GM12878 (cell line): ENCODE measurements at regions of chr2 and their contacts with region 1.

Region 1: GRCh38 chr2:179264368-179265081 is at the start of gene SESTD1:
- DNase-seq: no peak
- ATAC-seq: peak; percentile 70
- H3K4me3 ChIP-seq: peak within 1 kb of the TSS; percentile 97
- H3K27ac ChIP-seq: peak within 1 kb of the TSS; percentile 52; the same call in 1 of the 2 replicates
- H3K4me1 ChIP-seq: peaks cover 5% of the 10 kb centered on the region
- H3K27me3 ChIP-seq: no peaks in the 10 kb centered on the region
- CTCF ChIP-seq: no peak
- EP300 ChIP-seq: no peak
- POLR2A ChIP-seq: peak; percentile 64
- RAD21 ChIP-seq: no peak
- polyA plus RNA-seq, gene SESTD1: 5.4 to 6.2 TPM

Region 2: DNA sequence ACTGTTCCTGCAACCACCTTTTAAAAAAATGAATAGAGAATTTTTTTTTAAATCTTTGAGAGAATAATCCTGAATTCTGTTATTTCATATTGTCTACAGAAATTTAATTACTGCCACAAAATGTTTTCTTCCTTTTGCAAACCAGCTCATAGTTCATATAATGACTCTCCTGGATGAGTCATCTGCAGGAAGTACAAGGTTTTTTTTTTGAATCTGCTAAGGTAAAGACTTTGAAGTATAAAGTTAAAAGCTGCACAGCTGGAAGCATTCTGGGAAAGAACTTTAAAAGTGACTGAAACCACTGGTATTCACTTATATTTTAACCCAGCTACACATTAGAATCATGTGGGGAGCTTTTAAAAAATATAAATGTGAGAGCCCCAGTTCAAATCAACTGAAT is 25.3 kb before region 1 on chr2:
- CTCF ChIA-PET with region 1: interaction called, 4 read pairs
- POLR2A ChIA-PET with region 1: interaction called, 10 read pairs
- RAD21 ChIA-PET with region 1: interaction called, 11 read pairs
- SMC1A ChIA-PET with region 1: interaction called, 13 read pairs
- in situ Hi-C with region 1: no loop called
- intact Hi-C with region 1: no loop called
- DNase-seq: no peak
- ATAC-seq: peak; percentile 83
- H3K4me3 ChIP-seq: no peak overlapping the region
- H3K27ac ChIP-seq: no peak overlapping the region
- H3K4me1 ChIP-seq: no peaks in the 10 kb centered on the region
- H3K27me3 ChIP-seq: no peaks in the 10 kb centered on the region
- CTCF ChIP-seq: no peak
- EP300 ChIP-seq: no peak
- POLR2A ChIP-seq: no peak
- RAD21 ChIP-seq: no peak

Region 3: GRCh38 chr2:179247318-179248023 is 17.1 kb before region 1 on chr2:
- CTCF ChIA-PET with region 1: interaction called, 16 read pairs
- POLR2A ChIA-PET with region 1: interaction called, 10 read pairs
- RAD21 ChIA-PET with region 1: interaction called, 18 read pairs
- SMC1A ChIA-PET with region 1: interaction called, 24 read pairs
- in situ Hi-C with region 1: no loop called
- intact Hi-C with region 1: no loop called
- DNase-seq: no peak
- ATAC-seq: peak; percentile 48
- H3K4me3 ChIP-seq: peak overlapping the region; percentile 30; the same call in 1 of the 2 replicates
- H3K27ac ChIP-seq: peak overlapping the region; percentile 79
- H3K4me1 ChIP-seq: peaks cover 19% of the 10 kb centered on the region
- H3K27me3 ChIP-seq: no peaks in the 10 kb centered on the region
- CTCF ChIP-seq: no peak
- EP300 ChIP-seq: no peak
- POLR2A ChIP-seq: no peak
- RAD21 ChIP-seq: no peak

Region 4: GRCh38 chr2:179253226-179253625 is 11.3 kb before region 1 on chr2:
- CTCF ChIA-PET with region 1: interaction called, 16 read pairs
- POLR2A ChIA-PET with region 1: interaction called, 10 read pairs
- RAD21 ChIA-PET with region 1: interaction called, 18 read pairs
- SMC1A ChIA-PET with region 1: interaction called, 24 read pairs
- in situ Hi-C with region 1: no loop called
- intact Hi-C with region 1: no loop called
- DNase-seq: no peak
- ATAC-seq: peak; percentile 75
- H3K4me3 ChIP-seq: no peak overlapping the region
- H3K27ac ChIP-seq: peak overlapping the region; percentile 63; the same call in 1 of the 2 replicates
- H3K4me1 ChIP-seq: peaks cover 42% of the 10 kb centered on the region
- H3K27me3 ChIP-seq: no peaks in the 10 kb centered on the region
- CTCF ChIP-seq: no peak
- EP300 ChIP-seq: no peak
- POLR2A ChIP-seq: no peak
- RAD21 ChIP-seq: no peak

Region 5: GRCh38 chr2:180006781-180007579 is 742.5 kb after region 1 on chr2 and contains the start of gene CWC22:
- CTCF ChIA-PET with region 1: no interaction called
- POLR2A ChIA-PET with region 1: no interaction called
- RAD21 ChIA-PET with region 1: no interaction called
- SMC1A ChIA-PET with region 1: no interaction called
- in situ Hi-C with region 1: no loop called
- intact Hi-C with region 1: loop called (anchors 10 kb)
- DNase-seq: peak; percentile 91
- ATAC-seq: peak; percentile 93
- H3K4me3 ChIP-seq: peak within 1 kb of the TSS; percentile 89
- H3K27ac ChIP-seq: peak within 1 kb of the TSS; percentile 98
- H3K4me1 ChIP-seq: peaks cover 5% of the 10 kb centered on the region
- H3K27me3 ChIP-seq: no peaks in the 10 kb centered on the region
- CTCF ChIP-seq: no peak
- EP300 ChIP-seq: no peak
- POLR2A ChIP-seq: peak; percentile 88
- RAD21 ChIP-seq: no peak
- polyA plus RNA-seq, gene CWC22: 26.4 to 29.5 TPM

Region 6: DNA sequence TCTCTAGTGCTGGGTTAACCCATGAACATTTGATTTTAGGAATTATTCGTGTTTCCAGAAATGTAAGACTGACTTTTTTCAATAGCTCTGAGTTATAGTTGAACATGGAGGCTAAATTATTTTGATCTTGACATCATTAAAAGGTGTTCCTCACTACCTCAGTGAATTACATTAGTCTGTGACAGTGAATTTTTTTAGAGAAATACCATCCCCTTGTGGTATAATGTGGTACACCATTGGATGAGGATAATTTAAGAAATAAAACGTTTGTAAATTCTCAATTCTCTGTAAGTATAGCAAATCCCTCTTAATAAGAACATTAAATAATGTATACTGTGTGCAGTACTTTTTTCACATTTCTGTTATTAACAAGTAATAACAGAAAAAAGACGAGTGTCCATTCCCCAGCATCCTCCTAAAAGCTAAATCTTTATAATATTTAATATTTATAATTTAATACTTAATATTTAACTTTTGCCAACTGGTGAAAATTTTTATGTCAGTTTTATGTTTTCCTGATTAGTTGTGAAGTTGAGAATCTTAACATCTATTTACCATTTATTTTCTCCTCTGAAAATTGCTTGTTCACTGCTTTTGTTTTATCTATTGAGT is 812.9 kb after region 1 on chr2:
- CTCF ChIA-PET with region 1: no interaction called
- POLR2A ChIA-PET with region 1: no interaction called
- RAD21 ChIA-PET with region 1: no interaction called
- SMC1A ChIA-PET with region 1: no interaction called
- in situ Hi-C with region 1: no loop called
- intact Hi-C with region 1: no loop called
- DNase-seq: no peak
- ATAC-seq: peak; percentile 45; the same call in 1 of the 3 replicates
- H3K4me3 ChIP-seq: no peak overlapping the region
- H3K27ac ChIP-seq: no peak overlapping the region
- H3K4me1 ChIP-seq: no peaks in the 10 kb centered on the region
- H3K27me3 ChIP-seq: no peaks in the 10 kb centered on the region
- CTCF ChIP-seq: peak; percentile 52 to 55 (median 54); a peak in 5 of 6 replicates
- EP300 ChIP-seq: no peak
- POLR2A ChIP-seq: no peak
- RAD21 ChIP-seq: peak; percentile 72